HepG2 (cell line): ENCODE measurements at regions of chr16 and their contacts with region 1.

Region 1: GRCh38 chr16:77905459-77905858 is 116.9 kb upstream of the CLEC3A start:
- DNase-seq: no peak
- ATAC-seq: no peak
- H3K4me3 ChIP-seq: no peak overlapping the region
- H3K27ac ChIP-seq: no peak overlapping the region
- H3K4me1 ChIP-seq: no peaks in the 10 kb centered on the region
- H3K27me3 ChIP-seq: peaks cover 0 to 10% of the 10 kb centered on the region in 2 experiments; a peak in 2 of 5 replicates
- CTCF ChIP-seq: no peak
- EP300 ChIP-seq: no peak
- POLR2A ChIP-seq: no peak
- RAD21 ChIP-seq: no peak

Region 2: DNA sequence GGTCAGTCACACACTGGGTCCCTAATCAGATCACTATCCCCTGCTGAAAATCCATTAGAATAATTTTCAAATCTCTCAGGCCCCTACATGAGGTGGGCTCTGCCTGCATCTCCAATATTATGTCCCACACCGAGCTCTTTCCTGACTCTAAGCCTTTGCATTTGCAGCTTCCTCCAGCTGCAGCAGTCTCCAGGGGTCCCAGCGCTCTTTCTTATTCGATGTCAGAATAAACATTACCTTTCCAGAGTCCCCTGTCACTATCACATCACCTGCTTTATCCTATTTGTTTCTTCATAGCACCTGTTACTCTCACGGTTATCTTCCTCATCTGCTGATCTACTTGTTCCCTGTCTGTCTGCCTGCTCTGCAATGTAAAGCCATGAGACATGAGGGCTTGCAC is 771.8 kb before region 1 on chr16:
- CTCF ChIA-PET with region 1: no interaction called
- POLR2A ChIA-PET with region 1: no interaction called
- in situ Hi-C with region 1: no loop called
- intact Hi-C with region 1: loop called (anchors 5 kb)
- DNase-seq: no peak
- ATAC-seq: no peak
- H3K4me3 ChIP-seq: no peak overlapping the region
- H3K27ac ChIP-seq: no peak overlapping the region
- H3K4me1 ChIP-seq: no peaks in the 10 kb centered on the region
- H3K27me3 ChIP-seq: no peaks in the 10 kb centered on the region
- CTCF ChIP-seq: no peak
- EP300 ChIP-seq: no peak
- POLR2A ChIP-seq: no peak
- RAD21 ChIP-seq: no peak